Naive thymus-derived CD4-positive, alpha-beta T cell (primary cell): ENCODE measurements at regions of chr1 and their contacts with region 1.

Region 1: GRCh38 chr1:58546520-58547308 is at the start of gene OMA1:
- DNase-seq: peak; percentile 96 to 98 (median 98)
- ATAC-seq: peak; percentile 97
- H3K4me3 ChIP-seq: peak within 1 kb of the TSS; percentile 65
- H3K4me3 Mint-ChIP-seq: peak within 1 kb of the TSS; percentile 92 to 98 (median 96)
- H3K27ac ChIP-seq: peak within 1 kb of the TSS; percentile 95
- H3K27ac Mint-ChIP-seq: peak within 1 kb of the TSS; percentile 95 to 99 (median 99)
- H3K4me1 ChIP-seq: peaks cover 7% of the 10 kb centered on the region in 2 donors
- H3K4me1 Mint-ChIP-seq: peaks cover 11 to 44% (median 33%) of the 10 kb centered on the region in 7 donors
- H3K27me3 ChIP-seq: no peaks in the 10 kb centered on the region
- H3K27me3 Mint-ChIP-seq: peaks cover 0 to 28% (median 0%) of the 10 kb centered on the region in 5 donors
- total RNA-seq, gene OMA1: 22.7 to 72.5 (median 46.5) TPM

Region 2: DNA sequence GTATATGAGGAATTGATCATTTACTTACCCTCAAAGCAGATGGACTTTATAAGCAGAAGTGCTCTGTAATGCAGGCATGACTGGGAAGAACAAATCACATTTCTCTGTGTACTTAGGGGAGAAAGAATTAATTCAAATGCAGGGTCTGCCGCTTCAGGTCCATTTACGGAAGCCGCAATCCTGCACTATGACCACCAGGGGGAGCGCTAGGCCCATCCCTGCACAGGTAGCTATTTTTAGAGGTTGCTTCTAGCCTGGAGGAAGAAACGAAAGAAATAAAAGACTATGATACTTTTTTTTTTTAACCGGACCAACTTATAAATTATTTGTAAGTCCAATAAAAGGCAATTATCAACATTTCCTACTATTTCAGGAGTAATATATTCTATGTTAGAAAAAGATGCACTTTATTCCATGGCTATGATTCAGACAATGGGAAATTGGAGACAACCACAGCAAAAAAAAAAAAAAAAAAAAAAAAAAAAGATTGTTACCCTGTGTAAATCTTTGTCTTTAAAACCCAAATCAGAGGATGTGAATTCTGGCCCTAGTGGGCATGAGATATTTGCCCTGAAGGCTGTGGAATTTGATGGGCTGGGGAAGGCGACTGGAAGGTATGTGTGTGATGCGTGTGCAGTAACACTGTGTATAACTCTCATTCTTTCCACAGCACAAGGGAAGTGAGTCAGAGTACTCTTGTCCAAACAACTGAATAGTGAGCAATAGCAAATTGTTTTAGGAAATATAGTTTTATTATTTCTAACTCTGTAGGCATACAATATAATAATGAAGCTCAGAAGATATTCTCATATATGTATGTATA is 1714.6 kb before region 1 on chr1:
- CTCF ChIA-PET with region 1: interaction called, 3 read pairs
- POLR2A ChIA-PET with region 1: no interaction called
- intact Hi-C with region 1: loop called (anchors 1 kb)
- DNase-seq: peak; percentile 39 to 76 (median 56)
- ATAC-seq: peak; percentile 83
- H3K4me3 ChIP-seq: no peak overlapping the region
- H3K4me3 Mint-ChIP-seq: peak overlapping the region in 3 of 10 donors; percentile 20 to 51 (median 22)
- H3K27ac ChIP-seq: no peak overlapping the region
- H3K27ac Mint-ChIP-seq: no peak overlapping the region
- H3K4me1 ChIP-seq: no peaks in the 10 kb centered on the region
- H3K4me1 Mint-ChIP-seq: peaks cover 0 to 8% (median 3%) of the 10 kb centered on the region in 7 donors
- H3K27me3 ChIP-seq: peaks cover 0 to 4% of the 10 kb centered on the region in 2 donors
- H3K27me3 Mint-ChIP-seq: peaks cover 0 to 31% (median 23%) of the 10 kb centered on the region in 5 donors

Region 3: GRCh38 chr1:58324558-58324957 is 222.2 kb before region 1 on chr1:
- CTCF ChIA-PET with region 1: no interaction called
- POLR2A ChIA-PET with region 1: interaction called, 4 read pairs
- intact Hi-C with region 1: loop called in 1 of 2 experiments (anchors 10 kb)
- DNase-seq: peak in 6 of 9 donors; percentile 36 to 68 (median 50)
- ATAC-seq: peak; percentile 49
- H3K4me3 ChIP-seq: no peak overlapping the region
- H3K4me3 Mint-ChIP-seq: peak overlapping the region in 9 of 10 donors; percentile 6 to 78 (median 74)
- H3K27ac ChIP-seq: peak overlapping the region; percentile 39
- H3K27ac Mint-ChIP-seq: peak overlapping the region in 8 of 9 donors; percentile 67 to 92 (median 85)
- H3K4me1 ChIP-seq: peaks cover 0 to 20% of the 10 kb centered on the region in 2 donors
- H3K4me1 Mint-ChIP-seq: peaks cover 0 to 62% (median 38%) of the 10 kb centered on the region in 7 donors
- H3K27me3 ChIP-seq: no peaks in the 10 kb centered on the region
- H3K27me3 Mint-ChIP-seq: peaks cover 0 to 4% (median 0%) of the 10 kb centered on the region in 5 donors

Region 4: DNA sequence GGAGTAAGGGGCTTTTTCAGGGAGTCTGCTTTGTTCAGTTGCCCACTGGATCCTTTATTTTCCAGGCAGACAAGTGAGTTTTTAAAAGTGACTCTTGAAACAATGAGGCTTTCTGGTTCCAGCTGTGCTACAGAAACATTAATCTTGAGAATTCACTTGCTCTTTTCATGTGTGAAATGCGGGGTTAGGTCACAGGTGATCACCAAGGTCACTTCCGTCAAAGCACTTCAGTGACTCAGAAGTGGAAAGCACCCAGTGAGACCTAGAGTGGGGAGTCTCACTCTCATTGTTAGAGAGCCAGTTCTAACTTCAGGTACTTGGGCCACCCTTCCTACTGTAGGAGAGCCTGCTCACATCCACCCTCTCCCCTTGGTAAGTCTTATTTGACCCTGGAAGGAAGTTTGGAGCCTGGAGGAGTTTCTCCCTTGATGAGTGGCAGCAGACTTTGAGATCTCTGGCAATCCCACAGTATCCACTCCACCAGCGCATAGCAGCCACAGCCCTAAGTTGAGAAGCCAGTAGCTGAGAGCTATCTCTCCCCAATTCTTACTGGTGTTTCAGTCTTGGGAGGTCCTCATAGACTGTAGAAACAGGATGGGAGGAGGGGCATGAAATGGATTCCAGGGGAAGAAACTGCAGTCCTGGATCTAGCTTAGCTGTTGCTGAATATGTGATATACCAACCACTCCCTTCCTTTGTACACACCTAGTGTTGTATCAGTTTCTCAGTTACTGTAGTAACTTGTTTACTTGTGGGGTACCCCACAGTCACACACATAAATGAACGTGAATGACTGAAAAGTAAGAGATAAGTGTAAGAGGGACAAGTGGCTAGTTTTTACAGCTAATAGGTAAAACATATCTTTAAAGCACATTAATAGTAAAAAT is 27.2 kb after region 1 on chr1:
- CTCF ChIA-PET with region 1: no interaction called
- POLR2A ChIA-PET with region 1: no interaction called
- intact Hi-C with region 1: loop called in 1 of 2 experiments (anchors 1 kb)
- DNase-seq: peak in 5 of 9 donors; percentile 15 to 41 (median 19)
- ATAC-seq: peak; percentile 85
- H3K4me3 ChIP-seq: no peak overlapping the region
- H3K4me3 Mint-ChIP-seq: peak overlapping the region in 1 of 10 donors; percentile 50
- H3K27ac ChIP-seq: no peak overlapping the region
- H3K27ac Mint-ChIP-seq: peak overlapping the region in 2 of 9 donors; percentile 22 to 74
- H3K4me1 ChIP-seq: peaks cover 0 to 3% of the 10 kb centered on the region in 2 donors
- H3K4me1 Mint-ChIP-seq: peaks cover 6 to 35% (median 19%) of the 10 kb centered on the region in 7 donors
- H3K27me3 ChIP-seq: peaks cover 4 to 8% of the 10 kb centered on the region in 2 donors
- H3K27me3 Mint-ChIP-seq: peaks cover 57 to 89% (median 77%) of the 10 kb centered on the region in 5 donors

Region 5: DNA sequence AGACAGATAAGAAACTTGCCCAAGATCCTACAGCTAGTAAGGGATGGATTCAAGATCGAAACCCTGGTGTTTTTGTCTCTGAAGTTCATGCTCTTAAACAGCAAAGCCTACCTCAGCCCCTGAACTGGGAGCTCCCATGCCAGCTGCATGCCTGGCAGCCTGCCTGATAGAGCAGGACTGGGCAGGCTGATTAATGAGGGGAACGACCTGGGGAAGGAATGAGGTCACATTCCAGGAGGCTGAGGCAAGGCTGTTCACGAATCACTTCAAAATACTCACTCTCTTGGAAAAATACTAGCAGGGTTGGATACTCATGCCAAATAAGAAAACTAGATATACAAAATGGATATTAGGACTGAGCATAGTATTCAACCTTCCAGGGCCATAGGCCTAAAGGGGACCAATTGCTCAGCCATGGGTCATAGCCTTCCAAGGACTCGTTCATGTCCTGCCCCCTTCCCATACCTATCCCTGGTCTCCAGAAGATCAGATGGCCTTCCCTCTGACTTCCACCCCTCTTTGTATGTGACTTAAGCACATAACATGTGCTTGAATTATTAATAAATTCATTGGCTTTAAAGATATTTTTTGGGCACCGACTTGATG is 45.9 kb after region 1 on chr1:
- CTCF ChIA-PET with region 1: no interaction called
- POLR2A ChIA-PET with region 1: no interaction called
- intact Hi-C with region 1: no loop called
- DNase-seq: no peak
- ATAC-seq: no peak
- H3K4me3 ChIP-seq: no peak overlapping the region
- H3K4me3 Mint-ChIP-seq: no peak overlapping the region
- H3K27ac ChIP-seq: no peak overlapping the region
- H3K27ac Mint-ChIP-seq: no peak overlapping the region
- H3K4me1 ChIP-seq: no peaks in the 10 kb centered on the region
- H3K4me1 Mint-ChIP-seq: peaks cover 0 to under 1% (median 0%) of the 10 kb centered on the region in 7 donors
- H3K27me3 ChIP-seq: no peaks in the 10 kb centered on the region
- H3K27me3 Mint-ChIP-seq: peaks cover 10 to 43% (median 24%) of the 10 kb centered on the region in 5 donors

Region 6: GRCh38 chr1:58816072-58816746 is 269.5 kb after region 1 on chr1:
- CTCF ChIA-PET with region 1: no interaction called
- POLR2A ChIA-PET with region 1: no interaction called
- intact Hi-C with region 1: loop called in 1 of 2 experiments (anchors 10 kb)
- DNase-seq: peak; percentile 66 to 84 (median 71)
- ATAC-seq: peak; percentile 88
- H3K4me3 ChIP-seq: peak overlapping the region; percentile 89
- H3K4me3 Mint-ChIP-seq: peak overlapping the region; percentile 88 to 94 (median 92)
- H3K27ac ChIP-seq: peak overlapping the region; percentile 77
- H3K27ac Mint-ChIP-seq: peak overlapping the region; percentile 77 to 95 (median 90)
- H3K4me1 ChIP-seq: peaks cover 27 to 34% of the 10 kb centered on the region in 2 donors
- H3K4me1 Mint-ChIP-seq: peaks cover 19 to 49% (median 41%) of the 10 kb centered on the region in 7 donors
- H3K27me3 ChIP-seq: no peaks in the 10 kb centered on the region
- H3K27me3 Mint-ChIP-seq: peaks cover 0 to 5% (median 0%) of the 10 kb centered on the region in 5 donors

Region 7: DNA sequence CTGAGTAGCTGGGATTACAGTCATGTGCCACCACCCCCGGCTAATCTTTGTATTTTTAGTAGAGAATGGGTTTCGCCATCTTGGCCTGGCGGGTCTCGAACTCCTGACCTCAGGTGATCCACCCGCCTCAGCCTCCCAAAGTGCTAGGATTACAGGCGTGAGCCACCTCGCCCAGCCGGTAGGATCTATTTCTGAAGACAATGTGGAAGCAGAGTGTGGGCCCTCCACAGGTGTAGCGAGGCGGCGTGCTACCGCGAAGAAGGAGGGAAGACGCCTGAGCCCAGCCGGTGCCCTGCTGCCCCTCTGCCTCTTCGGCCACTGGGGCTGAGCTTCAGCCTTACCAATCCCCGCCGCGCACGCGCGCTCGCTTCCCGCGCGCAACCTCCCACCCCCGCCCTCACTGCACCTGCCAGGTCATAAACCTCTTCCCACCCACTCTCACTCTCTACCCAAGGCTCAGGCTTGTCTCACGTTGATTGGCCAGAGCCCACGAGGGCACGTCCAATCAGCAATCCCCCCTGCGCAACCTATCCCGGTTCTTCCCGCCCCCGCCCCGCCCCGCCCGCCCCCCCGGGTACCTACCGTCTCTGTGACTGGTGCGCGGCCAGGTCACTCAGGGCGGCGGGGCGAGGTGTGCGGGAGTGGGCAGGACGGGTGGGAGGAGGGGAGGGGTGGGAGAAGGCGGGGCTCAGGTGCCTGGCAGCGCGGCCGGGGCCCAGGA is 1267.6 kb after region 1 on chr1:
- CTCF ChIA-PET with region 1: no interaction called
- POLR2A ChIA-PET with region 1: no interaction called
- intact Hi-C with region 1: loop called (anchors 1 to 2 kb)
- DNase-seq: peak; percentile 65 to 95 (median 90)
- ATAC-seq: peak; percentile 95
- H3K4me3 ChIP-seq: peak overlapping the region; percentile 75
- H3K4me3 Mint-ChIP-seq: peak overlapping the region in 3 of 10 donors; percentile 90 to 92 (median 91)
- H3K27ac ChIP-seq: peak overlapping the region; percentile 91
- H3K27ac Mint-ChIP-seq: peak overlapping the region in 5 of 9 donors; percentile 72 to 95 (median 88)
- H3K4me1 ChIP-seq: peaks cover 0 to 23% of the 10 kb centered on the region in 2 donors
- H3K4me1 Mint-ChIP-seq: peaks cover under 1 to 8% (median 6%) of the 10 kb centered on the region in 7 donors
- H3K27me3 ChIP-seq: no peaks in the 10 kb centered on the region
- H3K27me3 Mint-ChIP-seq: peaks cover 6 to 25% (median 19%) of the 10 kb centered on the region in 5 donors